Stomach (tissue), 19 donors: ENCODE measurements at regions of chr13 and their contacts with region 1.

Region 1: GRCh38 chr13:110819203-110820014 is 95.5 kb downstream of the ANKRD10 start:
- DNase-seq: peak; percentile 84 to 92
- H3K4me3 ChIP-seq: no peak overlapping the region
- H3K27ac ChIP-seq: no peak overlapping the region
- H3K4me1 ChIP-seq: peaks cover 0 to 9% (median 6%) of the 10 kb centered on the region in 4 donors
- H3K27me3 ChIP-seq: no peaks in the 10 kb centered on the region
- CTCF ChIP-seq: peak in 6 of 7 experiments; percentile 25 to 98 (median 96)
- EP300 ChIP-seq: no peak
- POLR2A ChIP-seq: no peak

Region 2: DNA sequence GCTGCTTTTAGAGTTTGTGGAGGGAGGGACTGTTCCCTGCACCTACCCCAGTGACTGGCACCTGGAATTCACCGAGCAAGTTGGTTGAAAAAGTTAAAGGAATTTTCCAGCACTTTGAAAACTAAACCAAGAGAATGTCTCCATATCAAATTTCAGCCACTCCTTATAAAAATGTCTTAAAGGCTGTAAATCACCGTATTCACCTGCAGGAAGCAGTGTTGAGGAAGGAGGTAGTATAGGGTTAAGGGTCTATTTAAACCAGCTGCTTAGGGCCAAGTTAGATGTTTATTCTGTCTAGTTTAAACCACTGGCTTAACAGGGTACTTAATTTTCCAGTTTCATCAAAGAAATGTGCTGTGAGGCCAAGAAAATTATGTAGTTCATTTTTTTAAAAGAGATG is 254.1 kb before region 1 on chr13:
- intact Hi-C with region 1: no loop called
- DNase-seq: no peak
- H3K4me3 ChIP-seq: no peak overlapping the region
- H3K27ac ChIP-seq: peak overlapping the region in 2 of 5 donors; percentile 10 to 28
- H3K4me1 ChIP-seq: peaks cover 13 to 40% (median 33%) of the 10 kb centered on the region in 4 donors
- H3K27me3 ChIP-seq: no peaks in the 10 kb centered on the region
- CTCF ChIP-seq: peak in 1 of 7 experiments; percentile 28
- EP300 ChIP-seq: no peak
- POLR2A ChIP-seq: no peak

Region 3: GRCh38 chr13:110593430-110594130 is 225.8 kb before region 1 on chr13:
- intact Hi-C with region 1: loop called (anchors 10 kb)
- DNase-seq: peak in 1 of 2 donors; percentile 82
- H3K4me3 ChIP-seq: no peak overlapping the region
- H3K27ac ChIP-seq: no peak overlapping the region
- H3K4me1 ChIP-seq: peaks cover 0 to 13% (median 8%) of the 10 kb centered on the region in 4 donors
- H3K27me3 ChIP-seq: no peaks in the 10 kb centered on the region
- CTCF ChIP-seq: peak in 4 of 7 experiments; percentile 46 to 66 (median 55)
- EP300 ChIP-seq: no peak
- POLR2A ChIP-seq: no peak

Region 4: GRCh38 chr13:110726726-110727125 is 92.7 kb before region 1 on chr13:
- intact Hi-C with region 1: loop called (anchors 10 kb)
- DNase-seq: peak in 1 of 2 donors; percentile 23
- H3K4me3 ChIP-seq: no peak overlapping the region
- H3K27ac ChIP-seq: no peak overlapping the region
- H3K4me1 ChIP-seq: peaks cover 0 to 4% (median 0%) of the 10 kb centered on the region in 4 donors
- H3K27me3 ChIP-seq: no peaks in the 10 kb centered on the region
- CTCF ChIP-seq: no peak
- EP300 ChIP-seq: no peak
- POLR2A ChIP-seq: no peak

Region 5: DNA sequence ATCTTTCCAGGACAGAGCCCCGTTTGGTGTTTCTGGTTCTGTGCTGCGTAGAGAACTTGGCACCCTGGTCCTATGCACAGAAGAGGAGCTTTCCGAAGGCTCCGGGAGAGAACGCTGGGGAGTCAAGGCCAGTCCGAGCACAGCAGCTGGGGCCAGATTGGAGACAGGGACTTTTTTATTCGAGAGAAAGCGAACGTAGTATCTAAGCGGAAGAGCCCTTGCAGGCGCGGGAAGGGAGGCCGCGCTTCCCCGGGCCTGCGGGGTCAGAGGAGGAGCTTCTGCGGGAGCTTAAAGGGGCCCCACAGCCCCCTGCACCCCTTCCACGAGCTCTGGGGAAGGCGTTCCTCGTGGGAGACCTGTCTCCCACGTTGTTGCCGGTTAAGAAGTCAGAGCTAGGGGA is 247.1 kb after region 1 on chr13:
- intact Hi-C with region 1: no loop called
- DNase-seq: peak in 1 of 2 donors; percentile 41
- H3K4me3 ChIP-seq: peak overlapping the region in 2 of 4 donors; percentile 51 to 69
- H3K27ac ChIP-seq: peak overlapping the region in 3 of 5 donors; percentile 18 to 66 (median 50)
- H3K4me1 ChIP-seq: peaks cover 0 to 14% (median 8%) of the 10 kb centered on the region in 4 donors
- H3K27me3 ChIP-seq: peaks cover 0 to 31% (median 4%) of the 10 kb centered on the region in 3 donors
- CTCF ChIP-seq: no peak
- EP300 ChIP-seq: no peak
- POLR2A ChIP-seq: no peak

Region 6: GRCh38 chr13:111347438-111347837 is 528.0 kb after region 1 on chr13:
- intact Hi-C with region 1: no loop called
- DNase-seq: no peak
- H3K4me3 ChIP-seq: no peak overlapping the region
- H3K27ac ChIP-seq: no peak overlapping the region
- H3K4me1 ChIP-seq: no peaks in the 10 kb centered on the region
- H3K27me3 ChIP-seq: no peaks in the 10 kb centered on the region
- CTCF ChIP-seq: no peak
- EP300 ChIP-seq: no peak
- POLR2A ChIP-seq: no peak